Posterior cingulate gyrus (tissue), 11 donors: ENCODE measurements at regions of chr1 and their contacts with region 1.

Region 1: GRCh38 chr1:53485478-53486394 is 26.5 kb downstream of the DMRTB1 start:
- DNase-seq: peak; percentile 64 to 96 (median 82)

Region 2: DNA sequence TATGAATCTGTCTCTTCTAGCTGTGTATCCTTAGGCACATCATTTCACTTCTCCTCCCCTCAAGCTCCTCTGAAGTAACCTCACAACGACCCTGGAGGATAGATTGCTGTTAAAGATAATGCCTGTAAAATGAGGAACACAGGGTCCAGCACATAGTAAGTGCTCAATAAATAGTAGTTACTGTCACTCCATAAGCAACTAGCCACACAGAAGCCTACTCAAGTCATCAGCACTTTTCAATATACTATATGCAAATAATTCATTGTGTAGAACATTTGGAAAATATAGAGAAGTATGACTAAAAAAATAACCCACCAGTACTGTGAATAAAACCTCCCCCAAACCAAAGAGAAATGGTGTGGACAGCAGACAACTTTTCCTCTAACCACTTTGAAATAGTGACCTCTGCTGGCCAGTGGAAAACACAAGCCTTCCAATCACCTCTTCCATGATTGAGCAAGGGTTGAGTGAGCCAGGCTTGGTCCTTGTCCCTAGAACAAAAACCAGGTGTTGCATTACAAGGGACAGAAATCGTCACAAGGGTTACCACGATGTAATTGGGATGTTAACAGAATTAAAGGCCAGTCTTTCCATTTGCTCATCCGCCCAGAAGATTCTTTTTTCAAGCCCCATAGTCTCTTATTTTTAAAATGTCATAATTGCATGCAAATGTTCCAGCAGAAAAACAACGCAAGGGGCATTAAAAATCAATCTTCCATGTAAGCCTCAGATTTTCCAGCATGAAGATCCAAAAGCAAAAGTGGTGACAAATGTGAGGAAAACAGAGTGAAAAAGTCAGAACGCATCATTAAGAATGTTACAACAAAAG is 269.0 kb after region 1 on chr1:
- intact Hi-C with region 1: loop called (anchors 1 kb)
- DNase-seq: peak in 5 of 10 donors; percentile 17 to 69 (median 24)